PC-9 (cell line): ENCODE measurements at regions of chr10 and their contacts with region 1.

Region 1: DNA sequence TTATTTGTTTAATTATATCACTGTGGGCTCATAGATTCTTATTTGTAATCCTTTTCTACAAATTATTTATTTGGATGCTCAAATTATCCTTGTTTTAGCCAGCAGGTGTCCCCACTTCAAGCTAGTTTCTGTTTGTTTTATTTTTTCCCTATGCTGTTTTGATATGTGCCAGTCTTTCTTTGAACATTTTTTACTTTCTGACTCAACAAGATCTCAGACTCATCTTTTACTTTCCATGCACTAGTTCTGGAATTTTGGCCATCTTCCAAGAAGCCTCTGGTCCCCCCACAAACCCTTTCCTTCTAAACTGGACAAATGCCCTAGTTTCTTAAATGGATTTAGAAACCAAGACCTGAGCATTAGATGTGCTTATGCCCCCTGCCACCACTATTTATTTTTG is 11.5 kb upstream of the MRPS16 start:
- DNase-seq: peak in 1 of 2 experiments; percentile 43
- H3K4me3 ChIP-seq: no peak overlapping the region
- H3K27ac ChIP-seq: no peak overlapping the region; the same call in 1 of the 2 replicates
- H3K4me1 ChIP-seq: peaks cover 20% of the 10 kb centered on the region
- H3K27me3 ChIP-seq: no peaks in the 10 kb centered on the region
- CTCF ChIP-seq: peak; percentile 80

Region 2: DNA sequence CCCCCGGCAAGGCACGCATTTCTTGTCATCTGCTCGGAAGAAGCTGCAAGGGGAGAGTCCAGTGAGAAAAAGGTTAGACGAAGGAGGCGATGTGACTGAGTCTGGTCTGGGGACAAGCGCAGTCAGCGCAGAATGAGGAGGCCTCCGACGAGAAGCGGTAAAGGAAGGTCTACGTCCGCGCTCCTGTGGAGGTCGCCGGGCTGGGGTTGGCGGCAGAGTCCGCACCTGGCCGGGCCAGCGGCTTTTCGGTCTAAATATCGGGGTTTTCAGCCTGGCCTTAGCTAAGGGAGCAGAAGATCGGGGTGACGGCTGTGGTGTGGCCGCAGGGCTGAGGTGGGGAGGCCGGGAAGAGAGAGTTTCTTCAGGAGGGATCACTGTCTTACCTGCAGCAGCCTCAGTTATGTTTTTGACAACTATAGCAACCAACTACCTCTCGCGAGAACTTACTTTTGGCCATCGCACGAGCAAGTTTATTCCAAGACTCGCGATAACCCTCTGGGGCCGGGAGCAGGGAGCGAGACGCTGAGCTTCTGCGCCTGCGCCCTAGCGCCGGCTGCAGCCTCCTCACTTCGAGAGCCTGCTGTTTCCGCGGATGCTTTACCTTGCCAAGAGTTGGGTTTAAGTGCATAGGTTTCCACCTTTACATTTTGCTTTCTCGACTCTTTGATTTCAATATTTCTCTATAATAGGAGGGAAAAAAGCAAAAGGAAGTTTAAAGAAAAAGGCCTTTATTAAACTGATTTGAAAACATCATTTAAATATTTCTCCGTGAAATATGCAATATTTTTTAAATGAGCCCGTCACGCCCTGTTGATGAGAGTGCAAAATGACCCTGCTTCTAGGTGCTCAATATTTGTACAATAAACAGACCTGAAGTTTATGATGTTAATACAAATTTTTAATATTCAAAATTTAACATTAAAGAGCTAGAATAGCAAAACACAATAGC is 94.7 kb after region 1 on chr10 and contains the start of gene CFAP70:
- CTCF ChIA-PET with region 1: no interaction called
- POLR2A ChIA-PET with region 1: no interaction called
- intact Hi-C with region 1: loop called (anchors 2 kb)
- DNase-seq: peak; percentile 95
- H3K4me3 ChIP-seq: peak within 1 kb of the TSS; percentile 61
- H3K27ac ChIP-seq: no peak within 1 kb of the TSS
- H3K4me1 ChIP-seq: peaks cover 5% of the 10 kb centered on the region; the same call in 1 of the 2 replicates
- H3K27me3 ChIP-seq: no peaks in the 10 kb centered on the region
- CTCF ChIP-seq: no peak
- total RNA-seq, gene CFAP70: 3.1 and 4.1 TPM in 2 replicates